Colonic mucosa (tissue), 4 donors: ENCODE measurements at regions of chr1 and their contacts with region 1.

Region 1: GRCh38 chr1:1906185-1907097 is 8.6 kb upstream of the CALML6 start:
- DNase-seq: peak; percentile 89
- H3K4me3 ChIP-seq: no peak overlapping the region
- H3K27ac ChIP-seq: no peak overlapping the region
- H3K4me1 ChIP-seq: peaks cover 4% of the 10 kb centered on the region
- H3K27me3 ChIP-seq: no peaks in the 10 kb centered on the region
- CTCF ChIP-seq: peak; percentile 84

Region 2: GRCh38 chr1:1788646-1789431 is 117.6 kb before region 1 on chr1:
- intact Hi-C with region 1: loop called (anchors 5 kb)
- DNase-seq: peak; percentile 35
- H3K4me3 ChIP-seq: no peak overlapping the region
- H3K27ac ChIP-seq: no peak overlapping the region
- H3K4me1 ChIP-seq: no peaks in the 10 kb centered on the region
- H3K27me3 ChIP-seq: no peaks in the 10 kb centered on the region
- CTCF ChIP-seq: no peak

Region 3: DNA sequence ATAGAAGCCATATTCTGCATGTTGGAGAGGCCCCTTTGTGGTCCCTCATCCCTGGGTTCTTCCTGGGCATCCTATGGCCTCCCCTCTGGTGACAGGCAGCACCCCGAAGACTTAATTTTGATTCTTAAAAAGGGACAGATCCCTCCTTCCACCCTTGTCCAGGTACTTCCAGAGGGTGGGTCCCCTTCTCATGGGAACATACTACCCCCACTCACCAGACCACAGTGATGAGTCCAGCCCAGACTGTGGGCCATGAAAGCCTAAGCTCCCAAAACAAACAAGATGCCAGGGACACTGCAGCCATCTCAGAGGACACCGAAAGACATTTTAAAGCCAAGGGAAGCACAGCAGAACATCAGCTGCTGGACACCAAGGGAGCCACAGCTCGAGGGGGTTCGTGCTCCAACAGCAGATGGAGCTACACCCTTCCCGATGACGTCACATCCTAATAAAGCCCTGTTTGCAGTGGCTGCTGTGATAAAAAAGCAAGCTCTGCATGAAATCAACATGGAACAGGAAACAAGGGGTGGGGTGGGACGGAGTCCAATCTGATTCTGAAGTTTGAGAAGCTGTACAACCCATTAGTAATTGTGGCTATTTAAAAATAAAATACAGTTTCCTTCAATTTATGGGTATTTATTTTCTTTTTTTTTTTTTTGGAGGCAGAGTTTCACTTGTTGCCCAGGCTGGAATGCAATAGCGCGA is 47.9 kb before region 1 on chr1:
- intact Hi-C with region 1: loop called (anchors 10 kb)
- DNase-seq: peak; percentile 84
- H3K4me3 ChIP-seq: no peak overlapping the region
- H3K27ac ChIP-seq: peak overlapping the region; percentile 83
- H3K4me1 ChIP-seq: peaks cover 20% of the 10 kb centered on the region
- H3K27me3 ChIP-seq: no peaks in the 10 kb centered on the region
- CTCF ChIP-seq: peak; percentile 9